K562 (cell line): ENCODE measurements at regions of chr2 and their contacts with region 1.

Region 1: GRCh38 chr2:28894470-28895177 is at the start of gene WDR43:
- DNase-seq: peak; percentile 94 to 98 (median 96)
- ATAC-seq: peak; percentile 92
- H3K4me3 ChIP-seq: peak within 1 kb of the TSS; percentile 94
- H3K27ac ChIP-seq: peak within 1 kb of the TSS; percentile 97
- H3K4me1 ChIP-seq: peaks cover 10 to 21% of the 10 kb centered on the region in 2 experiments; a peak in 4 of 5 replicates
- H3K27me3 ChIP-seq: no peaks in the 10 kb centered on the region
- CTCF ChIP-seq: no peak
- EP300 ChIP-seq: peak; percentile 54; the same call in 1 of the 2 replicates
- POLR2A ChIP-seq: peak; percentile 95
- RAD21 ChIP-seq: no peak
- polyA plus RNA-seq, gene WDR43: 34.6 to 39.2 TPM

Region 2: GRCh38 chr2:28828382-28828781 is 66.2 kb before region 1 on chr2:
- CTCF ChIA-PET with region 1: no interaction called
- POLR2A ChIA-PET with region 1: no interaction called
- in situ Hi-C with region 1: no loop called
- intact Hi-C with region 1: loop called (anchors 5 kb)
- DNase-seq: no peak
- ATAC-seq: no peak
- H3K4me3 ChIP-seq: no peak overlapping the region
- H3K27ac ChIP-seq: no peak overlapping the region
- H3K4me1 ChIP-seq: no peaks in the 10 kb centered on the region
- H3K27me3 ChIP-seq: no peaks in the 10 kb centered on the region; a peak in 1 of 5 replicates
- CTCF ChIP-seq: no peak
- EP300 ChIP-seq: no peak
- POLR2A ChIP-seq: no peak
- RAD21 ChIP-seq: no peak

Region 3: GRCh38 chr2:28870146-28870891 is 24.3 kb before region 1 on chr2 and contains the start of gene TRMT61B:
- CTCF ChIA-PET with region 1: no interaction called
- POLR2A ChIA-PET with region 1: interaction called, 9 read pairs
- in situ Hi-C with region 1: no loop called
- intact Hi-C with region 1: loop called (anchors 2 kb)
- DNase-seq: peak; percentile 97 to 98 (median 98)
- ATAC-seq: peak; percentile 99
- H3K4me3 ChIP-seq: peak within 1 kb of the TSS; percentile 94
- H3K27ac ChIP-seq: peak within 1 kb of the TSS; percentile 93
- H3K4me1 ChIP-seq: peaks cover 4 to 12% of the 10 kb centered on the region in 2 experiments; a peak in 4 of 5 replicates
- H3K27me3 ChIP-seq: no peaks in the 10 kb centered on the region
- CTCF ChIP-seq: no peak
- EP300 ChIP-seq: 0 out of 2 replicates have a peak, but pooled peaks have one; percentile 16
- POLR2A ChIP-seq: peak; percentile 98
- RAD21 ChIP-seq: no peak
- polyA plus RNA-seq, gene TRMT61B: 16.7 to 26.8 TPM

Region 4: GRCh38 chr2:28909655-28910353 is 15.2 kb after region 1 on chr2:
- CTCF ChIA-PET with region 1: no interaction called
- POLR2A ChIA-PET with region 1: interaction called, 30 read pairs
- in situ Hi-C with region 1: no loop called
- intact Hi-C with region 1: no loop called
- DNase-seq: no peak
- ATAC-seq: no peak
- H3K4me3 ChIP-seq: no peak overlapping the region
- H3K27ac ChIP-seq: no peak overlapping the region
- H3K4me1 ChIP-seq: no peaks in the 10 kb centered on the region; a peak in 1 of 5 replicates
- H3K27me3 ChIP-seq: no peaks in the 10 kb centered on the region
- CTCF ChIP-seq: no peak
- EP300 ChIP-seq: no peak
- POLR2A ChIP-seq: no peak
- RAD21 ChIP-seq: no peak